ENCODE measurements at regions of chr13 and their contacts with region 1.

Region 1: DNA sequence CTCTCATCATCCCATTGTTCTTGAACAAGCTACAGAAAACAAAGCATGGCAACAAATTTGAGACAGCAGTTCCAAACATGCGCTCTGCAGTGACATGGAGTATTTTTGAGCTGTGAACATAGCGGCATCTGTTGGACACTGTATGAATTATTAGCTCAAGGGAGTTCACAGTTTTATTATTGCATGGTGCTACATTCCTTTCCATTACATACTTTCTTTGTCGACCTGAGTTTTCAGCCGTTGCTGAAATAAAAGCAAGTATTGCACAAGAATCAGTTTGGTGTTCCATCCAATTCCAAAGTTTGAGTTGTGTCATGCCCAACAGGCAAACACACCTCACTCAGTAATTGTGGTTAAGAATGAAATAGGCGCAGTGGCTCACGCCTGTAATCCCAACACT is 30.1 kb upstream of the METTL21C start:
- DNase-seq: no peak
- H3K4me3 Mint-ChIP-seq: no peak overlapping the region
- H3K27ac Mint-ChIP-seq: no peak overlapping the region
- H3K4me1 Mint-ChIP-seq: peaks cover 5% of the 10 kb centered on the region
- H3K27me3 Mint-ChIP-seq: peaks cover 3% of the 10 kb centered on the region

Region 2: DNA sequence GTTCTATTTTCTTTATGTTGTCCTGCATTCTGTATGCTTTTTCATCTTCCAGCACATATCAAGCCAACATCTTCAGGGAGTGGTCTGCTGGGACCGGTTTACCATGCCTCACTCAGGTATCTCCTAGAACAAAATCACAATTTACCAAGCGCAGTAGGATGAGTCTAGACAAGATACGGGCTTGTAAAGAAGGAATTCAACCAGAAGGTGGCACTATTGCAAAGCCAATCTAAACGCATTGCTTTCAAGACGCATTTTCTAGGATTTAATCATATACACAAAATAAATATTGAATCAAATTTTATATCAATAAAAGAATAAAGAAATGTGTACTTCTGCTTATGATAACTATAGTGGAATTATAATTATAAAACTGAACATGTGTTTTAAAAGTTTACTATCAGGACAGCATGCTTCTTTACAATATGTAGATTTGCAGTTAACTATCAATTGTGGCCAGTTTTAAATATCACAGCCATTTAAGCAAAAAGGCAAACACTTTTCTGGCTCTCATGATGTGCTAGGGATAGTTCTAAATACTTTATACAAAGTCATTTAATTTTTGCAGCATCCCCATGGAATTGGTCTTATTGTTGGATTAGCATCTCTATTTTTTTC is 144.3 kb before region 1 on chr13:
- CTCF ChIA-PET with region 1: interaction called, 3 read pairs
- POLR2A ChIA-PET with region 1: no interaction called
- intact Hi-C with region 1: loop called (anchors 1 kb)
- DNase-seq: no peak
- H3K4me3 Mint-ChIP-seq: no peak overlapping the region
- H3K27ac Mint-ChIP-seq: no peak overlapping the region
- H3K4me1 Mint-ChIP-seq: peaks cover 4% of the 10 kb centered on the region
- H3K27me3 Mint-ChIP-seq: peaks cover 1% of the 10 kb centered on the region

Region 3: GRCh38 chr13:102800145-102801041 is 75.5 kb after region 1 on chr13:
- CTCF ChIA-PET with region 1: no interaction called
- POLR2A ChIA-PET with region 1: no interaction called
- intact Hi-C with region 1: loop called (anchors 5 kb)
- DNase-seq: peak; percentile 88
- H3K4me3 Mint-ChIP-seq: peak overlapping the region; percentile 90
- H3K27ac Mint-ChIP-seq: peak overlapping the region; percentile 38
- H3K4me1 Mint-ChIP-seq: peaks cover 22% of the 10 kb centered on the region
- H3K27me3 Mint-ChIP-seq: peaks cover 5% of the 10 kb centered on the region

Region 4: GRCh38 chr13:103354171-103354570 is 629.2 kb after region 1 on chr13:
- CTCF ChIA-PET with region 1: no interaction called
- POLR2A ChIA-PET with region 1: no interaction called
- intact Hi-C with region 1: no loop called
- DNase-seq: no peak
- H3K4me3 Mint-ChIP-seq: no peak overlapping the region
- H3K27ac Mint-ChIP-seq: no peak overlapping the region
- H3K4me1 Mint-ChIP-seq: no peaks in the 10 kb centered on the region
- H3K27me3 Mint-ChIP-seq: peaks cover 1% of the 10 kb centered on the region

Measured in activated CD4-positive, alpha-beta memory T cell treated with anti-CD3 and anti-CD28 coated beads for 36 hours (primary cell).